Colonic mucosa (tissue), 4 donors: ENCODE measurements at regions of chr5 and their contacts with region 1.

Region 1: GRCh38 chr5:66814146-66814991 is 218.2 kb downstream of the MAST4 start:
- DNase-seq: peak; percentile 50
- H3K4me3 ChIP-seq: no peak overlapping the region
- H3K27ac ChIP-seq: no peak overlapping the region
- H3K4me1 ChIP-seq: no peaks in the 10 kb centered on the region
- H3K27me3 ChIP-seq: no peaks in the 10 kb centered on the region
- CTCF ChIP-seq: peak; percentile 76

Region 2: GRCh38 chr5:66864331-66864840 is 50.0 kb after region 1 on chr5:
- intact Hi-C with region 1: loop called (anchors 5 kb)
- DNase-seq: no peak
- H3K4me3 ChIP-seq: no peak overlapping the region
- H3K27ac ChIP-seq: no peak overlapping the region
- H3K4me1 ChIP-seq: no peaks in the 10 kb centered on the region
- H3K27me3 ChIP-seq: no peaks in the 10 kb centered on the region
- CTCF ChIP-seq: peak; percentile 30

Region 3: GRCh38 chr5:67156976-67157583 is 342.7 kb after region 1 on chr5:
- intact Hi-C with region 1: loop called (anchors 5 kb)
- DNase-seq: no peak
- H3K4me3 ChIP-seq: no peak overlapping the region
- H3K27ac ChIP-seq: no peak overlapping the region
- H3K4me1 ChIP-seq: no peaks in the 10 kb centered on the region
- H3K27me3 ChIP-seq: no peaks in the 10 kb centered on the region
- CTCF ChIP-seq: peak; percentile 85